ENCODE measurements at regions of chr4 and their contacts with region 1.

Region 1: GRCh38 chr4:107734120-107734519 is 14.1 kb upstream of the PAPSS1 start:
- DNase-seq: no peak
- ATAC-seq: peak in 2 of 4 donors; percentile 28 to 31
- H3K4me3 ChIP-seq: no peak overlapping the region
- H3K27ac ChIP-seq: no peak overlapping the region
- H3K4me1 ChIP-seq: peaks cover 0 to 7% (median 0%) of the 10 kb centered on the region in 12 donors
- H3K27me3 ChIP-seq: no peaks in the 10 kb centered on the region
- CTCF ChIP-seq: peak in 4 of 12 donors; percentile 6 to 23 (median 16)
- POLR2A ChIP-seq: no peak

Region 2: DNA sequence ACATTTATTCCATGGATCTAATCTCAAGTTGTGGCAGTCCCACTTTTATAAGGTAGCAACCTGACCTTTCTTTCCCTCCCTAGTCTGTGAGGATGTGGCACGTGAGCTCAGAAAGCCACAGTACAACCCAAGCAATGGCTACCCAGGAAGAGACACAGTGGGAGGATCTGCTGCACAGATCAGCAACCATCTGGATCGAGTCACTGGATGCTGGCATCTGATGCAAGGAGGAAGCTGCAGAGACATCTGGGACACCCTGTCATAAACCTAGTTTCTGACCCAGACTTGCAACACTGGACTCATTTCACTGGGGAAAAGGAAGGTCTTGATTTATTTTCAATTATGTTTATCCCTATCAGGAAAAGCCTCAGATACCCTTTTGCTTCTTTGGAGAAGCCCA is 341.2 kb before region 1 on chr4:
- intact Hi-C with region 1: loop called in 1 of 10 experiments (anchors 5 kb)
- DNase-seq: peak in 1 of 5 donors; percentile 24
- ATAC-seq: peak in 1 of 4 donors; percentile 52
- H3K4me3 ChIP-seq: no peak overlapping the region
- H3K27ac ChIP-seq: no peak overlapping the region
- H3K4me1 ChIP-seq: peaks cover 0 to 5% (median 0%) of the 10 kb centered on the region in 12 donors
- H3K27me3 ChIP-seq: no peaks in the 10 kb centered on the region
- CTCF ChIP-seq: no peak
- POLR2A ChIP-seq: no peak

Measured in heart left ventricle (tissue), 16 donors.